Naive thymus-derived CD4-positive, alpha-beta T cell (primary cell): ENCODE measurements at regions of chr4 and their contacts with region 1.

Region 1: DNA sequence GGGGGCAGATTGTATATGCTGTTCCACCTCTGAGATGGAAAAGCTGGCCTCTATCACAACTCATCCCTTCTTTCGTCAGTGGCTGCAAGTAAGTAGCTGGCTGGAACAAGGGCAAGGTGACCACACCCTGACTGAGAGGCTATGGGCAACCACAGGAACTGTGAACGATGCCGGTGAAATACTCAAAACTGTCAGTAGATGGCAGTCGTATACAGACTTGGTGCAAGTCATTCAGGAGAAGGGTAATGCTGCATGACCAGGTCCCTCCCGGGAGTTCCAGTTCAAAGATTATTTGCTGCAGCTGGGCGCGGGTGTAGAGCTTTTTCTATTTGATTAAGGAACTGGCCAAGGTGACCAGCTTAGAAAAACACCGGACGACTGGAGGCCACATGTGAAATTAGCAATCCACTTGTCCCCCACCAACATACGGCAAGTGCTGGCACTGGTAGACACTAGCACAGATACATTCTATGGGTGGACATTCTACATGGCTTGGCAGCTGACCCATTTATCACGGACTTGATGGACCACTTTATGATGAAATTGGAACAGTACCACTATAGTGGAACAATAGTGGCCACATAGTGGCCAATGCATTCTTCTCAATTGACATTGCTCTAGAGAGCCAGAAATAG is 726.7 kb downstream of the TRAM1L1 start:
- DNase-seq: peak in 6 of 9 donors; percentile 1 to 37 (median 8)
- ATAC-seq: peak; percentile 75
- H3K4me3 ChIP-seq: no peak overlapping the region
- H3K4me3 Mint-ChIP-seq: no peak overlapping the region
- H3K27ac ChIP-seq: no peak overlapping the region
- H3K27ac Mint-ChIP-seq: no peak overlapping the region
- H3K4me1 ChIP-seq: no peaks in the 10 kb centered on the region
- H3K4me1 Mint-ChIP-seq: peaks cover 0 to 5% (median 0%) of the 10 kb centered on the region in 7 donors
- H3K27me3 ChIP-seq: no peaks in the 10 kb centered on the region
- H3K27me3 Mint-ChIP-seq: no peaks in the 10 kb centered on the region

Region 2: DNA sequence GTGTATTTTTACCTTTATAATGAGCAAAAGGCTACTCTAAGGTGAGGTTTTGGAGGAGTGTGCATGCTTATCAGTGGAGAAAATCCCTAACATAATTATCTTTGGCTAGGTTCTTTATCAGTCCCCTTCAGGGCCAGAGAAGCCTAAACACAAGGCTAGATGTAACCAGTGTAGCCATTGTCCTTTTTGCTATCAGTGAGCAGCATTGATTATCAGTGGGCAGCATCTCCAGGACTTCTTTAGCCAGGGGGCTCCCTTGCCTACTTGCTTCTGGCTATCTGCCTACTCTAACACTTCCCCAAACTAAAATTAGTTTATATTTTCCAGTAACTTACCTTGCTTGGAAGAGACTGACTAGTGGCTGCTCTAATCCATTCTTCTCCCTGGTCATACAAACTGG is 131.0 kb after region 1 on chr4:
- CTCF ChIA-PET with region 1: no interaction called
- POLR2A ChIA-PET with region 1: no interaction called
- intact Hi-C with region 1: no loop called
- DNase-seq: no peak
- ATAC-seq: no peak
- H3K4me3 ChIP-seq: no peak overlapping the region
- H3K4me3 Mint-ChIP-seq: no peak overlapping the region
- H3K27ac ChIP-seq: no peak overlapping the region
- H3K27ac Mint-ChIP-seq: no peak overlapping the region
- H3K4me1 ChIP-seq: no peaks in the 10 kb centered on the region
- H3K4me1 Mint-ChIP-seq: no peaks in the 10 kb centered on the region
- H3K27me3 ChIP-seq: no peaks in the 10 kb centered on the region
- H3K27me3 Mint-ChIP-seq: no peaks in the 10 kb centered on the region

Region 3: GRCh38 chr4:118352843-118353533 is 1994.3 kb after region 1 on chr4 and contains the start of gene PRSS12:
- CTCF ChIA-PET with region 1: no interaction called
- POLR2A ChIA-PET with region 1: no interaction called
- intact Hi-C with region 1: loop called in 1 of 2 experiments (anchors 10 kb)
- DNase-seq: peak; percentile 5 to 69 (median 34)
- ATAC-seq: peak; percentile 84
- H3K4me3 ChIP-seq: peak within 1 kb of the TSS; percentile 13
- H3K4me3 Mint-ChIP-seq: peak within 1 kb of the TSS; percentile 78 to 86 (median 84)
- H3K27ac ChIP-seq: no peak within 1 kb of the TSS
- H3K27ac Mint-ChIP-seq: peak within 1 kb of the TSS in 4 of 9 donors; percentile 15 to 43 (median 32)
- H3K4me1 ChIP-seq: peaks cover 6 to 7% of the 10 kb centered on the region in 2 donors
- H3K4me1 Mint-ChIP-seq: peaks cover 6 to 20% (median 16%) of the 10 kb centered on the region in 7 donors
- H3K27me3 ChIP-seq: peaks cover 11 to 14% of the 10 kb centered on the region in 2 donors
- H3K27me3 Mint-ChIP-seq: peaks cover 72 to 83% (median 78%) of the 10 kb centered on the region in 5 donors
- total RNA-seq, gene PRSS12: not detected